ENCODE measurements at regions of chr7 and their contacts with region 1.

Region 1: GRCh38 chr7:121081327-121081936 is 92.9 kb downstream of the CPED1 start:
- H3K4me3 ChIP-seq: no peak overlapping the region
- H3K27ac ChIP-seq: no peak overlapping the region
- H3K4me1 ChIP-seq: no peaks in the 10 kb centered on the region
- CTCF ChIP-seq: 0 out of 2 replicates have a peak, but pooled peaks have one; percentile 60

Region 2: DNA sequence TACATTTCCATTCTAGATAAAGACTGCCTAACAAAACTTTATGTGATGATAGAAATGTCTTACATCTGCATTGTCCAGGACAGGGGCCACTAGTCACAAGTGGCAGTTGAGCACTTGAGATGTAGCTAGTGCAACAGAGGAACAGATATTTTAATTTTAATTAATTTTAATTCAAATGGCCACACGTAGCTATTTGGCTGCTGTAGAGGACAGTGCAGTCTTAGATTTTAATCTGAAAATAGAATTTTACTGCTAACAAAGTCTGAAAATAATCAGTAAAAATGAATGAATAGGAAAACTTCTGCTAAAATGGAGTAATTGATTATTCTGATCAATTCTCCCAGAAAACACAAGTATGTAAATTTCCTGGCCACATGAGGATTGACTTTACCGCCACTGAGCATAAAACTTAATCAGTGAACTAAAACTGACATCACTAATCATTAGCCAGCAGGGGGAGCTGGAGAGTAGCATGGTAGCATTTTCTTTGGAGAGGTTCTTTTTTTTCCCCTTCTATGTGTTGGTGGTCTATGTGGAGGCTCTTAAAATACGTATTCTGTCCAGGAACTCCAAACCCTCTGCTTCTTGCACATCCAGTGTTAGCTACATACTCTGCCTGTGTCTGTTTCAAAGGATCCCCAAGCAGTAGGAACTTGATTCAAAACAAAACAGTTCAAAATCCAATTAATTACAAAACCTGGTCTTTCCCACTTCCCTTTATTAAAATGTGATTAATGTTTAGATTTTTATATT is 275.6 kb before region 1 on chr7:
- CTCF ChIA-PET with region 1: interaction called, 13 read pairs
- POLR2A ChIA-PET with region 1: no interaction called
- H3K4me3 ChIP-seq: no peak overlapping the region
- H3K27ac ChIP-seq: no peak overlapping the region
- H3K4me1 ChIP-seq: peaks cover 7% of the 10 kb centered on the region; the same call in 1 of the 2 replicates
- CTCF ChIP-seq: peak; percentile 67

Region 3: GRCh38 chr7:120996333-120996987 is 85.0 kb before region 1 on chr7:
- CTCF ChIA-PET with region 1: interaction called, 152 read pairs
- POLR2A ChIA-PET with region 1: no interaction called
- H3K4me3 ChIP-seq: no peak overlapping the region
- H3K27ac ChIP-seq: no peak overlapping the region
- H3K4me1 ChIP-seq: no peaks in the 10 kb centered on the region
- CTCF ChIP-seq: no peak

Region 4: GRCh38 chr7:121099572-121099971 is 18.1 kb after region 1 on chr7:
- CTCF ChIA-PET with region 1: interaction called, 10 read pairs
- POLR2A ChIA-PET with region 1: no interaction called
- H3K4me3 ChIP-seq: no peak overlapping the region
- H3K27ac ChIP-seq: no peak overlapping the region
- H3K4me1 ChIP-seq: peaks cover 6% of the 10 kb centered on the region
- CTCF ChIP-seq: no peak

Region 5: GRCh38 chr7:121107923-121108498 is 26.6 kb after region 1 on chr7:
- CTCF ChIA-PET with region 1: interaction called, 14 read pairs
- POLR2A ChIA-PET with region 1: no interaction called
- H3K4me3 ChIP-seq: no peak overlapping the region
- H3K27ac ChIP-seq: no peak overlapping the region
- H3K4me1 ChIP-seq: peaks cover 2% of the 10 kb centered on the region
- CTCF ChIP-seq: no peak